Motor neuron (in vitro differentiated cells): ENCODE measurements at regions of chr11 and their contacts with region 1.

Region 1: GRCh38 chr11:25981998-25982397 is 349.9 kb upstream of the ANO3 start:
- ATAC-seq: peak; percentile 32 to 88 (median 50)
- H3K4me3 ChIP-seq: no peak overlapping the region
- H3K27ac ChIP-seq: no peak overlapping the region
- H3K4me1 ChIP-seq: no peaks in the 10 kb centered on the region

Region 2: DNA sequence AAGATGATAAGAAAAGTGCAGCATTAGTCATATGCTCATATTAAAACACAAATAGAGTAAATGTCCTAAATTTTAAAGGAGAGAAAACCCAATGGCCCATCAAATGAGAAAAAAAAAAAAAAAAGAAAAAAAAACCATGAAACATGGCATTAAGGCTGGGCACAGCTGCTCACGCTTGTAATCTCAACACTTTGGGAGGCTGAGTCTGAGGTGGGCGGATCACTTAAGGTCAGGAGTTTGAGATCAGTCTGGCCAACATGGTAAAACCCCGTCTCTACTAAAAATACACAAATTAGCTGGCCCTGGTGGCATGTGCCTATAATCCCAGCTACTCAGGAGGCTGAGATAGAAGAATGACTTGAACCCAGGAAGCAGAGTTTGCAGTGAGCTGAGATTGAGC is 165.6 kb before region 1 on chr11:
- in situ Hi-C with region 1: no loop called
- ATAC-seq: no peak
- H3K4me3 ChIP-seq: no peak overlapping the region
- H3K27ac ChIP-seq: no peak overlapping the region
- H3K4me1 ChIP-seq: no peaks in the 10 kb centered on the region

Region 3: DNA sequence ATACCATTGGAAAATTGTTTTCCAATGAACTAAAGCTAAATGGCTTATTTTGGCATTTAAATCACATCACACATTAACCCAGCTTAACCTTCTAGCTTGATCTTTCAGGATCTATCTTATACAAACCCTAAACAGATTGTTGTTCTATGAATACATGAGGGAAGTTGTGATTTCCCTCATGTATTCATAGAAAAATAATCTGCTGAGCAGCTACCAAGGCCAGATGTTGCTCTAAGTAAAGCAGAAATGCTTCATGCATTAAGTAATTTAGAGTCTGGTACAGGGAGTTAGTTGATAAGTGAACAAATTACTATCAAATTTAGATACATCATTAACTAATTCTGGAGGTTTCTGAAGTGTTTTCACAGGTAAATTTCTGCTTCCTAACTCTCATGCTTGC is 145.3 kb after region 1 on chr11:
- in situ Hi-C with region 1: loop called in 1 of 9 experiments (anchors 10 kb)
- ATAC-seq: no peak
- H3K4me3 ChIP-seq: no peak overlapping the region
- H3K27ac ChIP-seq: no peak overlapping the region
- H3K4me1 ChIP-seq: no peaks in the 10 kb centered on the region

Region 4: DNA sequence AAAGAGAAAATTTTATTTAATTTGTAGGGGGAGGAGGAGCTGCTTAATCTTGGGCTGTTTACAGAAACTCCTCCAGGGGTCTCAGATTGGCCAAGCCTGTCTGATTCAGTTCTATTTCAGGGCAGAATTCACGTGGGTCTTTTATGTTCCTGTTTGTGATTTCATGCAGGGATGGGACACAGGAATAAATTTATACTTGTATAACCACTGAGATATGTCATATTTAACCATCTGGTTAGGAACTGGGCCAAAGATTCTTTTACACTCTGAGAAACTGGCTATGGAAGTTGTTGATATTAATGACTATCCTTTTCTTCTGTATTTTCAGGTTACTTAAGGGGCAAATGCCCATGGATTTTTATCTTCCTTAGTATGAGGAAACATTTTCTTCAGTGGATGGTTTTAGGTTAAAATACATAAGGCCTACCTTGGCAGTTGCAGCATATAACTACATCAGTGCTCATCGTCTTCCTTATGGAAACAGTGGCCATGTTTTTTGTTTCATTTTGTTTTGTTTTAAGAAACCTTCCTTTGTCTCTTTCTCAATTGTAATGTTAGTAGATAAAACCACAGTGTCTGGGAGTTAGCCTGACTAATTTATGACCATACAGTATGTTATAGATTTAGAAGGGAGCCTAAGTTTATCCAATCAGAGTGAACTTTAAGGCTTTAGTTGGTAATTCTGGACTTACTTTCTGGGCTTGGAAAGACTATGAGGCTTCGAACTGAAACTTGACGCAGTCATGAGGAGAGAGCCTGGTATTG is 217.5 kb after region 1 on chr11:
- in situ Hi-C with region 1: loop called in 1 of 9 experiments (anchors 25 kb)
- ATAC-seq: peak in 1 of 8 experiments; percentile 29
- H3K4me3 ChIP-seq: no peak overlapping the region
- H3K27ac ChIP-seq: no peak overlapping the region
- H3K4me1 ChIP-seq: peaks cover 3% of the 10 kb centered on the region in 2 donors

Region 5: DNA sequence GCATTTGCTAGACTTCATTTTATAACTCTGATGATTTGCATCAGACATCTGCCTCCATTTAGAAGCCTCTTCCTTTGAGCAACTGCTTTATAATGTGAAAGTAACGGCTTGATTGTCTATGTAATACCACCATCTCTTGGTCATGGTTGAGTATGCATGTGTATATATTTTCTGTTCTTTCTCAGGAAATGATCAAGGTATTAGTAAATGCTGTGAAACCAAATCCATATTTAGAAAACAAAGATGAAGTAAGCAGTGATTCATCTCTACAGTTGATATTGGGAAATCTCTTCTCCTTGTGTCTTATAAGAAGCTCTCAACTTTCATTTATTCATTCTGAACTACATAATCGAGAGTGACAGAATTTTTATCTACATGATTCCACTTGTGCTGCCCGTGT is 245.3 kb after region 1 on chr11:
- in situ Hi-C with region 1: loop called in 2 of 9 experiments (anchors 10 to 25 kb)
- ATAC-seq: peak in 6 of 8 experiments; percentile 30 to 92 (median 66)
- H3K4me3 ChIP-seq: no peak overlapping the region
- H3K27ac ChIP-seq: no peak overlapping the region
- H3K4me1 ChIP-seq: no peaks in the 10 kb centered on the region

Region 6: GRCh38 chr11:26254378-26254777 is 272.4 kb after region 1 on chr11:
- in situ Hi-C with region 1: loop called in 2 of 9 experiments (anchors 25 kb)
- ATAC-seq: no peak
- H3K4me3 ChIP-seq: no peak overlapping the region
- H3K27ac ChIP-seq: no peak overlapping the region
- H3K4me1 ChIP-seq: peaks cover 0 to 7% of the 10 kb centered on the region in 2 donors

Region 7: DNA sequence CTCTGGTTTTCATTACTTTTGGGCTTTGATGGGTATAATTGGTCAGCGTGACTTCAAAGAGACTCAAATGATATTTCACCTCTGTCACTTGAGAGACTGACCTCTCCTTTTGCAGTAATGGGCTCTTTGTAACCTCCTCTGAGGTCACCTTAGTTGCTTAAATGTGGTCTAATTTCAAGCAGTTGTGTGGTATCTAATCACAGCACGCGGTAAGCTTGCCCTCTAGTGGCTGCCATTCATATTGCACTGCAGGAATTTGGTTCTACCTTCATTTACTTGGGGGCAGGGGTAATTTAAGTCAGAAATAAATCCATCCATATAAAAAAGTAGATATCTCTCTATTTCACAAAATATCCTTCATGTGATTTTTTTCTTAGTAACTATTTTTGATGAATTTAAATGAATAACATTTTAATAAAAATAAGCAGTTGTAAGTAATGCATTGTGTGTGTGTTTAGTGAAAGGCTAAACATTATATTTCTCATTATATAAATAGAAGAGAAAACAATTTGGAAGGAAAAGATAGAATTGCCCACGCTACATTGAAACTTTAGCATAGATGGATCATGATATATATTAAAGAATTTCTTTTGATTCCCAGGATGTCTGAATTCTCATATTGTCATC is 294.9 kb after region 1 on chr11:
- in situ Hi-C with region 1: loop called in 4 of 9 experiments (anchors 10 to 25 kb)
- ATAC-seq: peak; percentile 63 to 81 (median 71)
- H3K4me3 ChIP-seq: no peak overlapping the region
- H3K27ac ChIP-seq: no peak overlapping the region
- H3K4me1 ChIP-seq: no peaks in the 10 kb centered on the region

Region 8: GRCh38 chr11:26319906-26320305 is 337.9 kb after region 1 on chr11:
- in situ Hi-C with region 1: no loop called
- ATAC-seq: peak in 7 of 8 experiments; percentile 61 to 95 (median 80)
- H3K4me3 ChIP-seq: no peak overlapping the region
- H3K27ac ChIP-seq: peak overlapping the region in 1 of 2 donors; percentile 6
- H3K4me1 ChIP-seq: peaks cover 6% of the 10 kb centered on the region in 2 donors